Heart left ventricle (tissue), 16 donors: ENCODE measurements at regions of chr9 and their contacts with region 1.

Region 1: DNA sequence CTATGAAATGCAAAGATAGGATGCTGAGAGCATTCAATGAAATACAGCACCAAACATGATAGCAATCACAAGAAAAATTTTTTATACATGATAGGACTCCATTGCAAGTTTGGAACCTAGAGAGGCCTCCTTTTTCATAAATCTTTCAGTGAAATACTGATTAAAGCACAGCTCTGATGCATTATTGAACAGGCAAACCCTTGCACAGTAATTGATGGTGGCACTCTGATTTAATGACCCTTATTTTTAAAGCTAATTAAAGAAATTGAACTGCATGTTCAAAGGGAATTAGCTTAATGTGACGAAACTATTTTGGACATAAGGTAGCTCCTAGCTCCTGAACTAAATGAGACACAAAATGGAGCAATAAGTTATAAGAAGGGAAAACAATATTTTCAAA is 44.6 kb downstream of the MPDZ start:
- DNase-seq: no peak
- ATAC-seq: no peak
- H3K4me3 ChIP-seq: no peak overlapping the region
- H3K27ac ChIP-seq: no peak overlapping the region
- H3K4me1 ChIP-seq: no peaks in the 10 kb centered on the region
- H3K27me3 ChIP-seq: no peaks in the 10 kb centered on the region
- CTCF ChIP-seq: no peak
- POLR2A ChIP-seq: no peak

Region 2: GRCh38 chr9:13035822-13036221 is 199.1 kb before region 1 on chr9:
- intact Hi-C with region 1: no loop called
- DNase-seq: no peak
- ATAC-seq: no peak
- H3K4me3 ChIP-seq: no peak overlapping the region
- H3K27ac ChIP-seq: no peak overlapping the region
- H3K4me1 ChIP-seq: peaks cover 0 to 6% (median 0%) of the 10 kb centered on the region in 12 donors
- H3K27me3 ChIP-seq: no peaks in the 10 kb centered on the region
- CTCF ChIP-seq: no peak
- POLR2A ChIP-seq: no peak

Region 3: DNA sequence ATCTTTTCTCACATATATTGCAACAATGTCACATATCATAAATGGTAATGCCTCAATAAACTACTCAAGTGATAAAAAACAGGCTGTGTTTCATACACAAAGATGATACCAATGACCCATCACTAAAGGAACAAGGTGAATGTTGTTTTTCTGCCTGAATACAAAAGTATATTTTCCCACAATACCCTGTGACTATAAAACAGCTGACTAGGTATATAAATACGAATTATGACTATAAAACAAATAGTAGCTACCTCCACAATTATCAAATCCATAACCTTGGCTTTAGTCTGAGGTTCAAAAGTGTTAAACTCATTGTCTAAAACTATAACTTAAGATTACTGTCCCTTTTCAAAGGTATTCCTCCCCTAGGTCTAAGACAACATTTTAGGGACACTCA is 14.1 kb before region 1 on chr9:
- intact Hi-C with region 1: loop called in 1 of 10 experiments (anchors 1 kb)
- DNase-seq: no peak
- ATAC-seq: no peak
- H3K4me3 ChIP-seq: no peak overlapping the region
- H3K27ac ChIP-seq: no peak overlapping the region
- H3K4me1 ChIP-seq: no peaks in the 10 kb centered on the region
- H3K27me3 ChIP-seq: no peaks in the 10 kb centered on the region
- CTCF ChIP-seq: no peak
- POLR2A ChIP-seq: no peak